ENCODE measurements at regions of chr2 and their contacts with region 1.

Region 1: DNA sequence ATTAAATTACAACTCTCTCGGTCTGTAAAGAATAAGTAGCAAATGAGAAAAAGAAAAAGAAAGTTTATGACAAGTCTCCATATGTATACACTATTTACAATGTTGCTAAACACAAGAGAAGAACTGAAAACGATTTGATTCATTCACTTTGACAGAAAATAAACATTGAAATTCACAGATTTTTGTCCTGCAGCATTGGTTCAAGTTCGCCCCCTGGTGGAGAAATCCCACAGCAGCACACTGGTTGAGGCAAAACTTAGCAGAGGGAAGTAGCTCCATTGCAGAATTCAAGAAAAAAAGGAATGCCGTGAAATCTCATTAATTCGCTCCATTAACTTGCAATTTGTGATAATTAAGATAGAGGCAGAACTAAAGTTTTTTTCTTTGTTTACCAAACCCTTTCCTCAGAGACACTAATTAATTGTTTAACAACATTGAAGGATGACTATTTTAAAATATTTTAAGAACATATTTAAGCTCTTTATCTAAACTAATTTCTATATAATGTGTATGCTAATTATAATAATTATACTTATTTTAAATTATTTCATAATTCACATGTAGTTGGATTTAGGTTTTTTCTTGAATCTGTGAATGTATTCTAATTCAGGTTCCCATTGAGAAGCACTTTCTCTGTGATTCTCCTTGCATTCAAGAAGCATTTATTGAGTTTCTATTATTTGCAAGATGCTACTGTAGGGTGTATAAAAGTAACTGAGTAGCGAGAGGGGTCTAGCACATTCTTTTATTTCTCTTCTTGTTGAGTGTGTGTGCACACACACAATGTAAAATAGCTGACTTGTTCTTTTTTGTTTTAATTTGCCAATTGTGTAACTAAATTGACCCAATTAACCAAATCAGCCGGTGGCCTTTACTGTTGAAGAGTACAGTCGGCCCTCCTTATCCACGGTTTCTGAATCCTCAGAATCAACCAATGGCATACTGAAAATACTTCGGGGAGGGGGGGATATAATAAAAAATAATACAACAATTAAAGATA is 74.1 kb downstream of the COL4A3 start:
- DNase-seq: peak in 4 of 5 donors; percentile 54 to 66 (median 65)
- ATAC-seq: no peak
- H3K4me3 ChIP-seq: no peak overlapping the region
- H3K27ac ChIP-seq: no peak overlapping the region
- H3K4me1 ChIP-seq: no peaks in the 10 kb centered on the region
- H3K27me3 ChIP-seq: no peaks in the 10 kb centered on the region
- CTCF ChIP-seq: peak; percentile 88 to 98 (median 96)
- POLR2A ChIP-seq: no peak

Region 2: DNA sequence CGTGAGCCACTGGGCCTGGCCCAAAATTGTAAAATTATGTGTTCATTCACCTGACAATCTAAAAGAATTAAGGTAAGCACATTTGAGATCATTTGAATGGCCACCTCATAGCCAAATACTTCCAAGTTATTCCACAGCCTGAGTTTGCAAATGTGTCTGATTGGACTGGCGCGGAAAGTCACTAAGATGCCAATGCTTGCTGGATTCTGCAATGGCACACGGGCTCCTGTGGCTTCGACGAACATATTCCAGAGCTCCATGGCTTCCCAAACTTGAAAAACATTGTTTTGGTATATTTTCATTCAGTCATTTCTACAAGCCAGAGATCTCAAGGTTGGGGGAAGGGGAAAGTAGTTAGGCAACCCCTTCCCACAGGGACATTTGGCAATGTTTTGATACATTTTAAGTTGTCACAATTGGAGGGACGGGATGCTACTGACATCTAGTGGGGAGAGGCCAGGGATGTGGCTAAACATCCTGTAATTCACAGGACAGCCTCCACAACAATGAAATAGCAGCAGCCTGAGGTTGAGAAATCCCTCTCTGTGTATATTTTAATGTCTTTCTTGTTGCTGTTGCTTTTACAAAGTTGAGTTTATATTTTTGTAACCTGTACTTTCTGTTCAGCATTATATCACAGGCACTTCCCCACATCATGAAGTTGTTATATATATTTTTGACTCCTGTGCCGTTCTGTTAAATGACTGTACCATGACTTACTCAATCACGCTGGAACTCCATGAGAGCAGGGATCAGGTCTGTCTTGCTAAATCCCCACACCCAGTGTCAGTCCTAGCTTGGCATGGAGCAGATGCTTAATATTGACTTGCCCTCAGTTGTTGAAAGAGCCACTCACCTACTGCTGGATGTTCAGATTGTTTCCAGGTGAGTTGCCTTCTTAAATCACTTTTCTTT is 131.4 kb before region 1 on chr2:
- intact Hi-C with region 1: no loop called
- DNase-seq: peak in 1 of 5 donors; percentile 22
- ATAC-seq: peak in 3 of 4 donors; percentile 37 to 66 (median 59)
- H3K4me3 ChIP-seq: no peak overlapping the region
- H3K27ac ChIP-seq: no peak overlapping the region
- H3K4me1 ChIP-seq: no peaks in the 10 kb centered on the region
- H3K27me3 ChIP-seq: no peaks in the 10 kb centered on the region
- CTCF ChIP-seq: peak; percentile 46 to 64 (median 56)
- POLR2A ChIP-seq: no peak

Region 3: GRCh38 chr2:227127201-227127600 is 111.3 kb before region 1 on chr2:
- intact Hi-C with region 1: loop called (anchors 1 to 2 kb)
- DNase-seq: no peak
- ATAC-seq: peak in 3 of 4 donors; percentile 18 to 30 (median 23)
- H3K4me3 ChIP-seq: no peak overlapping the region
- H3K27ac ChIP-seq: no peak overlapping the region
- H3K4me1 ChIP-seq: peaks cover 0 to 8% (median 0%) of the 10 kb centered on the region in 12 donors
- H3K27me3 ChIP-seq: peaks cover 0 to 3% (median 0%) of the 10 kb centered on the region in 9 donors
- CTCF ChIP-seq: no peak
- POLR2A ChIP-seq: no peak

Region 4: GRCh38 chr2:227132986-227133385 is 105.6 kb before region 1 on chr2:
- intact Hi-C with region 1: loop called in 9 of 10 experiments (anchors 1 to 2 kb)
- DNase-seq: no peak
- ATAC-seq: peak in 2 of 4 donors; percentile 19 to 33
- H3K4me3 ChIP-seq: no peak overlapping the region
- H3K27ac ChIP-seq: no peak overlapping the region
- H3K4me1 ChIP-seq: peaks cover 0 to 4% (median 0%) of the 10 kb centered on the region in 12 donors
- H3K27me3 ChIP-seq: peaks cover 0 to 3% (median 0%) of the 10 kb centered on the region in 9 donors
- CTCF ChIP-seq: no peak
- POLR2A ChIP-seq: no peak

Region 5: DNA sequence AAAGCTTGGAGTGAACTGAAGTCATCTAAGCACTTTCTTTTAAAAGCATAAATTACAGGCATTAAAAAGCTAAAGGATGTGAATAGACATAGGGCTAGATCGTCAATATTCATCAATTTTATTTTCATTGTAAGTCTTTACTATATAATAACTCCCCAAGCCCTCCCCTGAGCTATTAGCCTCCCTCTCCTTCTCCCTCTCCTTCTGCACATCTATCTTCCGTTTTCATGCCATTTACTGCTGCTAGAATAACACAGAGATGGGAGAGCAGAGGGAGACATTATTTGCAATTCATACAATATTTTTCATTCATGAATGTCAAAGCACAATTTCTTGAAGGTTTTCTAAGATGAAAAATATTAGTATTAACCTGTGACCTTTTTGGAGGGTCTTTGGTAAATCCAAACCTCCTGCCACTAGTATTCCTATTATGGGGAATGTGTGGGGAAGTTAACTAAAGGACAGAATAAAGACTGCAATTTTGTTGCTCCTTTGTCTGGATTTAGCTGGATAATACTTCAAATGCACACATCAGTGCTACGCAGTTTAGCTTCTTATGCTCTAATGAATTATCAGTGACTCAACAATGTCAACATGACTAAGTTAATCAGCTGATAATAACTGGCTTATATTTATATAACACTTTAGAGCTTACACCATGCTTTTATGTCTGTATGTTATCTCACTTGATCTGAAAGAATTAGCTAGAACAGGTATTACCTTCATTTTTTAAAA is 58.3 kb after region 1 on chr2:
- intact Hi-C with region 1: no loop called
- DNase-seq: no peak
- ATAC-seq: no peak
- H3K4me3 ChIP-seq: no peak overlapping the region
- H3K27ac ChIP-seq: no peak overlapping the region
- H3K4me1 ChIP-seq: no peaks in the 10 kb centered on the region
- H3K27me3 ChIP-seq: no peaks in the 10 kb centered on the region
- CTCF ChIP-seq: no peak
- POLR2A ChIP-seq: no peak

Measured in heart left ventricle (tissue), 16 donors.